B cell (primary cell): ENCODE measurements at regions of chr3 and their contacts with region 1.

Region 1: DNA sequence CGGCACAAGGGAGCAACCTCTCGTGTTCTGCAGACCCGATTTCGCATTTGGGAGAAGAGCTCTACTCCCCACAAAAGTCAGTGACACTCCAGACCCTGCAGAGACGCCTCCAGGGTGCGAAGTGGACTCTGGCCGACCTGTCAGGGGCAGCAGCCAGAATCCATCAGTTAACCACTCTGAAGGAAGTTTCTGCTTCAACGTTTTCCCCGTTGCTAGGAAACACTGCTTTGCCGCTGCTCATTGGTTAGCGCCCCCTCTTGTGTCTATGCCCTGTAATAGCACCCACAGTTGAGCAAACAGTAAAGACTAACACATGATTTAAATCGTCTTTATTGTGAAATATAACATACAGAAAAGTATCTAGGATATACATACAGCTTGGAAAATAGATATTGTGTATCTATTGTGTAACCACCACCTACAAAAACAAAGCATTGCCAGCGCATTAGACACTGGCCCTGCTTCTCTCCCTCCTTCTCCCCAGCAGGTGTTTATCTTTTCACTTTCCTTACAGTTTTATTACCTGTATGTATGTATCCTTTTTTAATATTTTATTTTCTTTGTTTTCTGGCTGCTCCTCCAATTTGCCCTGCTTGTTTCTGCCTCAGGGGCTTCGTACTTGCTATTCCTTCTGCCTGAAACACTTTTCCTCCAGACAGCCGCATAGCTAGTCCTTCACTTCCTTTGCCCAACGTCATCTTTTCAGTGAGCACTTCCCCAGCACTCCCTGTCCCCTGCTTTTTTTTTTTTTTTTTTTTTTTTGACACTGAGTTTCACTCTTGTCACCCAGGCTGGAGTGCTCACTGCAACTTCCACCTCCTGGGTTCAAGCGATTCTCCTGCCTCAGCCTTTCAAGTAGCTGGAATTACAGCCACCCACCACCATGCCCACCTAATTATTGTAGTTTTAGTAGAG is 38.8 kb downstream of the TMEM40 start:
- DNase-seq: peak; percentile 85
- ATAC-seq: peak; percentile 99
- H3K4me3 ChIP-seq: peak overlapping the region in 2 of 5 experiments; percentile 17 to 20
- H3K4me3 Mint-ChIP-seq: peak overlapping the region; percentile 78
- H3K27ac ChIP-seq: no peak overlapping the region
- H3K27ac Mint-ChIP-seq: peak overlapping the region; percentile 82
- H3K4me1 ChIP-seq: peaks cover 3 to 11% of the 10 kb centered on the region in 2 donors
- H3K4me1 Mint-ChIP-seq: peaks cover 7% of the 10 kb centered on the region
- H3K27me3 ChIP-seq: peaks cover 0 to 6% (median 2%) of the 10 kb centered on the region in 4 experiments
- H3K27me3 Mint-ChIP-seq: peaks cover 6% of the 10 kb centered on the region
- CTCF ChIP-seq: peak; percentile 90

Region 2: GRCh38 chr3:12135029-12135657 is 585.1 kb before region 1 on chr3:
- CTCF ChIA-PET with region 1: interaction called, 9 read pairs
- POLR2A ChIA-PET with region 1: no interaction called
- intact Hi-C with region 1: loop called (anchors 5 kb)
- DNase-seq: peak; percentile 63
- ATAC-seq: peak; percentile 60
- H3K4me3 ChIP-seq: no peak overlapping the region
- H3K4me3 Mint-ChIP-seq: no peak overlapping the region
- H3K27ac ChIP-seq: no peak overlapping the region
- H3K27ac Mint-ChIP-seq: no peak overlapping the region
- H3K4me1 ChIP-seq: no peaks in the 10 kb centered on the region
- H3K4me1 Mint-ChIP-seq: no peaks in the 10 kb centered on the region
- H3K27me3 ChIP-seq: no peaks in the 10 kb centered on the region
- H3K27me3 Mint-ChIP-seq: peaks cover 20% of the 10 kb centered on the region
- CTCF ChIP-seq: peak; percentile 85

Region 3: GRCh38 chr3:12706504-12707253 is 13.6 kb before region 1 on chr3:
- CTCF ChIA-PET with region 1: interaction called, 25 read pairs
- POLR2A ChIA-PET with region 1: no interaction called
- intact Hi-C with region 1: loop called (anchors 1 kb)
- DNase-seq: peak; percentile 67
- ATAC-seq: peak; percentile 97
- H3K4me3 ChIP-seq: no peak overlapping the region
- H3K4me3 Mint-ChIP-seq: no peak overlapping the region
- H3K27ac ChIP-seq: no peak overlapping the region
- H3K27ac Mint-ChIP-seq: no peak overlapping the region
- H3K4me1 ChIP-seq: no peaks in the 10 kb centered on the region
- H3K4me1 Mint-ChIP-seq: peaks cover 1% of the 10 kb centered on the region
- H3K27me3 ChIP-seq: peaks cover 0 to 7% (median 0%) of the 10 kb centered on the region in 4 experiments
- H3K27me3 Mint-ChIP-seq: peaks cover 8% of the 10 kb centered on the region
- CTCF ChIP-seq: peak; percentile 77